GM13977 (cell line): ENCODE measurements at regions of chr10 and their contacts with region 1.

Region 1: DNA sequence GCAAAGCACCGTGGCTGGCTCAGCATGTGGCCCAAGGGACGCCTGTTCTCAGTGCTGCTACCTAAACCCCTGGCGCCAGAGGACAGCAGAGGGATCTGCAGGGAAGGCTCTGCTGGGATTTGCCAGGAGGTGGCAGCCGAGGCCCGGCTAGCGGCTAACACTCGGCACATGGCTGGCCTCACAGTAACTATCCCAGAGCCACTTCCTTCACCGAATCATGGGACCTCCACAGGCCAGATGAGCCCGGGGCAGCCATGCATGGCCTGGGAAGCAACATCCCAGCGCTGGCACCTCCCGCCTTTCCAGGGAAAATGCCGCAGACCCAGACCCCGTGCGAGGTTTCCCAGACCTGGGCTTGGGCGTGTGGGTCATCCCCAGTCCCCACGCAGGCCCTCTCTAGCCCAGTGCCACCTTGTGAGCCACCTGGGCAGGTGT is 36.4 kb downstream of the DPYSL4 start:
- DNase-seq: peak; percentile 88
- CTCF ChIP-seq: peak; percentile 98

Region 2: DNA sequence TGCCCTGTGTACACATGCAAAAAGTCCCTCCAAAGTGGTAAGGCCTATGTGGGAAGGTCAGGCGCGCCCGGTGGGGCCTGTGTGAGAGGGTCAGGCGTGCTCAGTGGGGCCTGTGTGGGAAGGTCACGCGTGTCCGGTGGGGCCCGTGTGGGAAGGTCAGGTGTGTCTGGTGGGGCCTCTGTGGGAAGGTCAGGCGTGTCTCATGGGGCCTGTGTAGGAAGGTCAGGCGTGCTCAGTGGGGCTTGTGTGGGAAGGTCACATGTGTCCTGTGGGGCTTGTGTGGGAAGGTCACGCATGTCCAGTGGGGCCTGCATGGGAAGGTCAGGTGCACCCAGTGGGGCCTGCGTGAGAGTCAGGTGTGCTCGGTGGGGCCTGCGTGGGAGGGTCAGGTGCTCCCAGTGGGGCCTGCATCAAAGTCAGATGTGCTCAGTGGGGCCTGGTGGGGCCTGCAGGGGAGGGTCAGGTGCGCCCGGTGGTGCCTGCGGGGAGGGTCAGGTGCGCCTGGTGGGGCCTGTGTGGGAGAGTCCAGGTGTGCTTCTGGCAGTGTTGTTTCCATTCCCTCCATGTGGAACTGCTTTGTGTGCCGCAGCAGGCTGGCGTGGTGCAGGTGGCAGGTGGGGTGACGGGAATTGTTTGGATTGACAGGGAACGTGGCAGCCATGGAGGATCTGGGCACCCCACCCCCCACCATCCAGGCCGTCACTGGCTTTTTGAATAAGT is 124.2 kb after region 1 on chr10:
- in situ Hi-C with region 1: loop called (anchors 10 kb)
- DNase-seq: no peak
- CTCF ChIP-seq: no peak

Region 3: GRCh38 chr10:132536971-132537712 is 314.0 kb after region 1 on chr10:
- in situ Hi-C with region 1: no loop called
- DNase-seq: peak; percentile 100
- CTCF ChIP-seq: peak; percentile 48

Region 4: GRCh38 chr10:132637477-132638129 is 414.4 kb after region 1 on chr10:
- in situ Hi-C with region 1: loop called (anchors 25 kb)
- DNase-seq: peak; percentile 89
- CTCF ChIP-seq: peak; percentile 82

Region 5: GRCh38 chr10:132654702-132655661 is 431.8 kb after region 1 on chr10:
- in situ Hi-C with region 1: no loop called
- DNase-seq: peak; percentile 92
- CTCF ChIP-seq: peak; percentile 92